ENCODE measurements at regions of chr10 and their contacts with region 1.

Region 1: DNA sequence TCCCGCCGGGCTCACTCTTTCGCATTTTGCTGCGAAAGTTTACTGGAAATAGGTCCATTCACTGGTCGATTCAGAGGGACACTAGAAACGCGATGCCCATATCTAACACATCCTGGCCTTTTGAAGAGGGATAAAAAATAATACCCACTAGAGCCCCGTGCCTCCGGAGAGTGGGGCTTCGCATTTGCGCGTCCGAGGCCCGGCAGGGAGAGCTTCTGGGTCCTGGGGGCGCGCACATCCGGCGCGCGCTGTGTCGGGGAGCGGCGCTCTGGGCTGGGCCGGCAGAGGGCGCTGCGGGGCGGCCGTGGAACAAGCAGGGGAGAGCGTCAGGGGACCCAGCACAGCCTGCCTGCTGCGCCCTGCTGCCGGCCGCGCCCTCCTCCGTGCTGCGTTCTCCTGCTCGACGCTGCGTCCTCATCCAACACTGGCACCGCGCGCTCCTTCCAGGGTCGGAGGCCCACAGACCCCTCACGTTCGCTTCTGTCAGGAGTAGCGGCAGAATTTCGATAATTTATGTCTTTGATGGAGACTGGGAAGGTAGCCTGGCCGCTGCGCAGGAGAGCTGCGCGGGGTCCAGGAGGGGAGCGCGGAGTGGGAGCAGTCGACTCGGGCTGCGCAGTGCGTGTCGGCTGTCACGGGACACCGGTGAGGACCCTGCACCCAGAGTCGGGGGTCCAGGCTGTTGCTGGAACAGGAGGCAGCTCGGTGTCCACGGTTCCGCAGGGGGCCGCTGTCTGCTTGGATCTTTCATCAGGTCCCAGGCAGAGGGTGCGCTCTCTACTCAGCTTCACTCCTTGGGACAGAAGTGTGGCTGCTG is 41.5 kb upstream of the ZNF32 start:
- DNase-seq: peak in 1 of 2 experiments; percentile 54
- H3K4me3 ChIP-seq: no peak overlapping the region
- H3K27ac ChIP-seq: no peak overlapping the region
- H3K4me1 ChIP-seq: no peaks in the 10 kb centered on the region
- H3K27me3 ChIP-seq: peaks cover 74% of the 10 kb centered on the region
- CTCF ChIP-seq: peak; percentile 36; the same call in 1 of the 2 replicates

Region 2: GRCh38 chr10:43482319-43483078 is 207.7 kb before region 1 on chr10:
- CTCF ChIA-PET with region 1: no interaction called
- POLR2A ChIA-PET with region 1: no interaction called
- intact Hi-C with region 1: no loop called
- DNase-seq: no peak
- H3K4me3 ChIP-seq: no peak overlapping the region
- H3K27ac ChIP-seq: no peak overlapping the region
- H3K4me1 ChIP-seq: no peaks in the 10 kb centered on the region
- H3K27me3 ChIP-seq: no peaks in the 10 kb centered on the region
- CTCF ChIP-seq: no peak

Region 3: GRCh38 chr10:43793704-43794103 is 103.5 kb after region 1 on chr10:
- CTCF ChIA-PET with region 1: no interaction called
- POLR2A ChIA-PET with region 1: no interaction called
- intact Hi-C with region 1: no loop called
- DNase-seq: no peak
- H3K4me3 ChIP-seq: no peak overlapping the region
- H3K27ac ChIP-seq: no peak overlapping the region
- H3K4me1 ChIP-seq: no peaks in the 10 kb centered on the region
- H3K27me3 ChIP-seq: peaks cover 83% of the 10 kb centered on the region
- CTCF ChIP-seq: no peak

Region 4: DNA sequence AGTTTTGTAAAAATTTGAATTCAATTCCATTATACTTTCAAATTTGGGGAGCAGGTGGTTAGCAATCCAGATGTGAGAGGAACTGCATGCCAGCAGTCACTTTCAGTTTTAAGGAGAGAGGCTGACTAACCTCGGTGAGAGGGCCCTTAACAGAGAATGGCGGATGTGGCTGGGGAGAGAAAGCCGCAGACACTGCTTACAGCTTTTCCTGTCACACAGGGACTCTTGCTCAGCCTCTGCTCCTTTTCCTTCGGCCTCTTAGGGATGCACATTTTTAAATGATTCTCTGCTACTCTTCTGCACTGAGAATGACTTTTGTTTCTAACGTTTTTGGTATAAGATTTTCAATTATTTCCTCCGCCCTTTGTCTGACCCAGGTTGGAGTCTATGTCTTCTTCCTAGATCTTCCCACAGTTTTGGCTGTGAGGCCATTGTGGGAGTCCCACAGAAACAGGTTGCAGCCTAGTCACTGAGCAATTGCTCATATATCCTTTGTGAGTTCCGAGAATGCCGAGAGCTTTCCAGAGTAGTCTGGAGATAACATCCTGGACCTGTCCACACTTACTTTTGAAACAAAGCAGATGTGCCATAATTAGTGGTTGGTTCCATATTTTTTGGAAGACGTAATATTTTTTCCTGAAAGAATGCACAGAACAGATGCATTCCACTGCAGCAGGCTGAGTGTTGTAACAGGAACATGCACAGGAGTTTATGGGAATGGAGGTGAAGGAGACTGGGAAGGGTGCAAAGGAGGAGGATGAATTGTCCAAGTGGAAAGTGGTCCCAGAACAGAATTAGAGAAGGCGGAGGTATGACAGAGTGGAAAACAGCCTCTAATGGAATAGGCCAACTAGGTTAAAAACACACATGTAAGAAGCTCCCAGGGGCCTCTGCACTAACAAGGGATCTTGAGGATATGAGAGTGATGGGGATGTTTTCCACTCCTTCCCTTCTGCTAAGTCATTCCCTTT is 126.5 kb after region 1 on chr10:
- CTCF ChIA-PET with region 1: interaction called, 10 read pairs
- POLR2A ChIA-PET with region 1: no interaction called
- intact Hi-C with region 1: no loop called
- DNase-seq: no peak
- H3K4me3 ChIP-seq: no peak overlapping the region
- H3K27ac ChIP-seq: no peak overlapping the region
- H3K4me1 ChIP-seq: no peaks in the 10 kb centered on the region
- H3K27me3 ChIP-seq: peaks cover 46% of the 10 kb centered on the region
- CTCF ChIP-seq: no peak

Region 5: DNA sequence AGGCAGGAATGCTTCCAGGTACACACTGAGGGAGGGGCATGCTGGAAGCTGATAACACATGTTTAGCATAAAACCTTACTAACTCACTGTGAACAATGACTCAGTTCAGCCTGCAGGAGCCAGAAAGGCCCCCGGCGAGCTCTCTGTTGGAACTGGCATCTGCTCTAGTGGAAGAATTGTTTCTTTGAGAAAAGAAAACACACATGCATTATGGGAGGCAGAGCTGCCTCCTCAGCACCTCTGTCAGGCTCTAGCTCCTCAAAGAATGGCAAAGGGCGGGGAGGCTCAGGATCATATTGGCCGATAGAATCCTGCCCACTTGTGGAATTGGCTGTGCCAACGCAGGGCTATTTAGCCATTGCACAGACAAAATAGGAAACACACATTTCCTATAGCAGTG is 356.4 kb after region 1 on chr10:
- CTCF ChIA-PET with region 1: no interaction called
- POLR2A ChIA-PET with region 1: no interaction called
- intact Hi-C with region 1: loop called (anchors 10 kb)
- DNase-seq: no peak
- H3K4me3 ChIP-seq: no peak overlapping the region
- H3K27ac ChIP-seq: no peak overlapping the region
- H3K4me1 ChIP-seq: no peaks in the 10 kb centered on the region
- H3K27me3 ChIP-seq: peaks cover 59% of the 10 kb centered on the region
- CTCF ChIP-seq: no peak

Region 6: GRCh38 chr10:44589181-44589943 is 899.2 kb after region 1 on chr10:
- CTCF ChIA-PET with region 1: no interaction called
- POLR2A ChIA-PET with region 1: no interaction called
- intact Hi-C with region 1: loop called (anchors 5 kb)
- DNase-seq: no peak
- H3K4me3 ChIP-seq: no peak overlapping the region
- H3K27ac ChIP-seq: no peak overlapping the region
- H3K4me1 ChIP-seq: no peaks in the 10 kb centered on the region
- H3K27me3 ChIP-seq: peaks cover 73% of the 10 kb centered on the region
- CTCF ChIP-seq: no peak